GM18951 (cell line): ENCODE measurements at regions of chr9 and their contacts with region 1.

Region 1: DNA sequence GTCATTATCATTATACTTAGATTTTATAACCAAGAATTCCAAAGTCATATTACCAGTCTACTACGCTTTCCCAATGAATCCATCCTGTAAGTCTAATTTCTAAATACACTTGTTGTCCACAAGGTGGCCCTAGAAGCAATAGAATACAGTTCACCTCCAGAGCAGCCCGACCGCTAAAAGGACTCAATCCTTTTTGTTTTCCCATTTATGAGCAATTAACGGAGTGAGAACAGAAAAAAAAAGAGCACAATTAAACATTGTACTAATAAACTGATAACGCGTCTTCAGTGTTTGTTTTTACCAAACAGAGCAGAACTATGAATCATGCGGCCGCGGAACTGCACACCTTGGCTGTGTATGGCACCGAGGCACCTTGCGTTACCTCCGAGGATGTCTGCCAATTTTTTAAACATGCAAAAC is 160.7 kb upstream of the DAPK1 start:
- POLR2A ChIP-seq: no peak

Region 2: GRCh38 chr9:87662808-87663528 is 326.0 kb after region 1 on chr9:
- in situ Hi-C with region 1: loop called (anchors 10 kb)
- POLR2A ChIP-seq: no peak